ENCODE measurements at regions of chr2 and their contacts with region 1.

Region 1: GRCh38 chr2:109497463-109497862 is 116.3 kb downstream of the SEPTIN10 start:
- DNase-seq: no peak
- ATAC-seq: peak in 4 of 8 donors; percentile 3 to 74 (median 34)
- H3K4me3 ChIP-seq: peak overlapping the region in 1 of 10 donors; percentile 8
- H3K27ac ChIP-seq: peak overlapping the region in 2 of 10 donors; percentile 5 to 60
- H3K4me1 ChIP-seq: peaks cover 0 to 35% (median 10%) of the 10 kb centered on the region in 9 donors
- H3K27me3 ChIP-seq: no peaks in the 10 kb centered on the region
- CTCF ChIP-seq: no peak

Region 2: DNA sequence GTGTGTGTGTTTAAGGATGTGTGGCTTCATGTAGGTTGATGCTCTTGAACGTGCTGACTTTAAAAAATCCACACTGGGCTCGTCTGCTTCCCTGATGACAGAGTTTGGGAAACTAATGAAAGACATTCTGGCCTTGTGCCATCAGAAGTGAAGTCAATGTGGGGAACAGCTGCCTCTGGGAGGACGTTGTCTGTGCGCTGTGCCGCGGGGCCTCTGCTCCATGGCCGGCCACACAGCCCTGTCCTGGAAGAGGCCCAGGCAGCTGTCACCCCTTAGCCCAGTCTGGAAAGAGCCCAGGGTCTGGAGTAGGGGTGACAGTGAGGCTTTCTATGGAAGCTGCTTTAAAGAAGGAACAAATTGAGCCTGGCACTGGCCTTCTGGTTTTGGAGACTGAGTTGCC is 212.6 kb before region 1 on chr2:
- intact Hi-C with region 1: loop called in 3 of 10 experiments (anchors 5 to 10 kb)
- DNase-seq: peak; percentile 63 to 69
- ATAC-seq: peak; percentile 78 to 90 (median 82)
- H3K4me3 ChIP-seq: no peak overlapping the region
- H3K27ac ChIP-seq: peak overlapping the region in 4 of 10 donors; percentile 3 to 44 (median 28)
- H3K4me1 ChIP-seq: peaks cover 14 to 65% (median 42%) of the 10 kb centered on the region in 9 donors
- H3K27me3 ChIP-seq: no peaks in the 10 kb centered on the region
- CTCF ChIP-seq: no peak

Region 3: GRCh38 chr2:109331896-109332848 is 165.3 kb before region 1 on chr2:
- intact Hi-C with region 1: loop called in 1 of 10 experiments (anchors 5 kb)
- DNase-seq: peak; percentile 63 to 65
- ATAC-seq: peak; percentile 82 to 95 (median 92)
- H3K4me3 ChIP-seq: peak overlapping the region in 7 of 10 donors; percentile 8 to 40 (median 26)
- H3K27ac ChIP-seq: peak overlapping the region in 8 of 10 donors; percentile 20 to 77 (median 62)
- H3K4me1 ChIP-seq: peaks cover 6 to 59% (median 29%) of the 10 kb centered on the region in 9 donors
- H3K27me3 ChIP-seq: peaks cover 0 to 6% (median 0%) of the 10 kb centered on the region in 7 donors
- CTCF ChIP-seq: no peak

Region 4: DNA sequence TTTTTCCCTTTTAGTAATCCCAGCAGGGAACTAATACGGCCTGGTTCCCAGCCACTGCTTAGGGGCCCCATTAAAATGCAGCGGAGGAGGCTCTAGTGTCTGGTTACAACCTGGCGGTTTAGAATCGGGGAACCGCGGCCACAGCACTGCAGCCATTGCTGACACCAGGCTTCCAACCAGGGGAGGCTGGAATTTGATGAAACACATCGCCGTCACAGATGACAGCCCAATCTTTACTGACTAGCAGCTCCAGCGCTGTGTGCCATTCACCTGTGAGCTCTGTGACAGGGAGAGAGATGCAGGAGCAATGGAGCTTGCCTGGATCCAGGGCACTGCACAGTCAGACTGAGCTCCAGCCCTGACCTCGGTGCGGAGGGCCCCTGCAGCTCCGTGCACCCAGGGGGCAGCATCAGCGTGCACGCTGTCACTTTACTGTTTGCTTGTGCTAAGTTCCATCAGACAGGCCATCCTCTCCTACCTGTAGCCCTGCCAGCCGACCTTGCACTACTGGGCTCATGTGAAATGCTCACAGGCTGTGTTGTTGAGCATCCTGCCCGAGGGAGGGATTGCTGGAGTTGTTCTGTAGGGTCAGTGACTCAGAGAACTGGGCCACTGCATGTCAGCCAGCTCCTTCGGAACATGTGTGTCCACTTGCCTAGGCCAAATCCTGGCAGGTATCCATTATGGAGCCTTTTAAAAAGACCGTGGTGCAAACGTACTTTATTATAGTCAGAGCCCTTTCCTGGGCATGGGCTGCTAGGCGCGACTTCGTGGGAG is 87.2 kb before region 1 on chr2:
- intact Hi-C with region 1: loop called in 1 of 10 experiments (anchors 10 kb)
- DNase-seq: no peak
- ATAC-seq: peak in 2 of 8 donors; percentile 18 to 48
- H3K4me3 ChIP-seq: no peak overlapping the region
- H3K27ac ChIP-seq: no peak overlapping the region
- H3K4me1 ChIP-seq: peaks cover 0 to 9% (median 0%) of the 10 kb centered on the region in 9 donors
- H3K27me3 ChIP-seq: no peaks in the 10 kb centered on the region
- CTCF ChIP-seq: no peak

Region 5: GRCh38 chr2:109448946-109449788 is 48.3 kb before region 1 on chr2:
- intact Hi-C with region 1: loop called in 2 of 10 experiments (anchors 10 kb)
- DNase-seq: peak; percentile 45 to 71
- ATAC-seq: peak; percentile 77 to 96 (median 89)
- H3K4me3 ChIP-seq: no peak overlapping the region
- H3K27ac ChIP-seq: peak overlapping the region in 6 of 10 donors; percentile 7 to 56 (median 39)
- H3K4me1 ChIP-seq: peaks cover 0 to 28% (median 18%) of the 10 kb centered on the region in 9 donors
- H3K27me3 ChIP-seq: no peaks in the 10 kb centered on the region
- CTCF ChIP-seq: peak in 4 of 9 donors; percentile 18 to 47 (median 36)